B cell (primary cell): ENCODE measurements at regions of chr16 and their contacts with region 1.

Region 1: DNA sequence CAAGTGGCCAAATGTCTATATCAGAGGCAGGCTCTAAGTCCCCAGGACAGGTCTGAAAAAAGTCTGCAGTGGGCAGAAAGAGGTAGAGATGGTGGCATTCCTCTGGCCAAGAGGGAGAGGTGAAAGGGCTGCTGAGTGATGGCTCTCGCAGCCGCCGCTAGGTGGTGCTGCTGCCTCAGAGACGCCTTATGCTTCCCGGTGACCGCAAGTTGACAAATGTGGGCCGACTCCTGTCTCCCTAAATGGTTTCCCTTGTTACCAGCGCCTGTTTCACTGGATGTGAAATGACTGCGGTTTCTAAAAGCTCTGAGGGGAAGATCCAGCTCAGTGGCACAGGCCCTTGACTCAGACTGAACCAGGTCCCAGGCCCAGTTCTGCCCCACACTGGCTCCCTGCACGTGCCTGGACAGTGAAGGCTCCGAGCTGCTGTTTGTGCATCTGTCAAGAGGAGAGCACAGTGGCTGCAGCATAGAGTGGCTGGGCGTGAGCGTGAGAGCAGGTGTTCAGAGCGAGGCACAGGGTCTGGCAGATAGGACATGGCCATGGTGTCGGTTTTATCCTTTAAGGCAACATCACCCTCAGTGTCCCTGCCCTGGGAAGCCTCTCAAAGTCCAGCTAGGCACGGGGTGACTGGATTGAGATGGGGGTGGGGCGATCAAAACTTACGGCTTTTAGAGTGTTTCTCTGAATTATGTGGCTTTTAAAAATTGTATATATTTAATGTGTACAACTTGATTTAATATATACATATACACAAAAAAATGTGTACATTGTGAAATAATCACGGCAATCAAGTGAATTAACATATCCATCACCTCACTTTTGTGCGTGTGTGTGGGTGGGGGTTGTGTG is 19.9 kb downstream of the CLEC16A start:
- DNase-seq: peak; percentile 86
- ATAC-seq: peak; percentile 35
- H3K4me3 ChIP-seq: no peak overlapping the region
- H3K4me3 Mint-ChIP-seq: peak overlapping the region; percentile 70
- H3K27ac ChIP-seq: no peak overlapping the region
- H3K27ac Mint-ChIP-seq: peak overlapping the region; percentile 86
- H3K4me1 ChIP-seq: peaks cover 23 to 27% of the 10 kb centered on the region in 2 donors
- H3K4me1 Mint-ChIP-seq: peaks cover 39% of the 10 kb centered on the region
- H3K27me3 ChIP-seq: no peaks in the 10 kb centered on the region
- H3K27me3 Mint-ChIP-seq: no peaks in the 10 kb centered on the region
- CTCF ChIP-seq: peak; percentile 95

Region 2: DNA sequence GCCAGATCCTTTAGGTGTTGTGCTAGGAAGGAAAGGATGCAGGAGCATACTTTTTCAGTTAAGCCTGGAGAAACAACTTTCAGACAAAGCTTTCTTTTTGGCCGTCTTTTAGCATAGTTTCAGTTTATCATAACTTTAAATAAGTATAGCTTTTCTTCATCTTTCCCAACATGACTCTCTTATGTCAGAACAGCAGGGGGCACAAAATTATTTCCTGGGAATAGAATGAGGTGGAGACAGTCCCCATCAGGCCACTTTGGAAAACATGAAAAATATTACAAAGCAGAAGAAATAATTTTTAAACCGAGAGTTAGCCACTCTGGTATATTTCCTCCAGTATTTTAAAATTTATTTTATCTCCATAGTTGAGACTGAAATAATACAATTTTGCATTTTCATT is 1485.3 kb before region 1 on chr16:
- CTCF ChIA-PET with region 1: no interaction called
- POLR2A ChIA-PET with region 1: no interaction called
- intact Hi-C with region 1: no loop called
- DNase-seq: no peak
- ATAC-seq: no peak
- H3K4me3 ChIP-seq: no peak overlapping the region
- H3K4me3 Mint-ChIP-seq: no peak overlapping the region
- H3K27ac ChIP-seq: no peak overlapping the region
- H3K27ac Mint-ChIP-seq: no peak overlapping the region
- H3K4me1 ChIP-seq: no peaks in the 10 kb centered on the region
- H3K4me1 Mint-ChIP-seq: no peaks in the 10 kb centered on the region
- H3K27me3 ChIP-seq: no peaks in the 10 kb centered on the region
- H3K27me3 Mint-ChIP-seq: peaks cover 7% of the 10 kb centered on the region
- CTCF ChIP-seq: no peak

Region 3: GRCh38 chr16:10944249-10945064 is 19.8 kb before region 1 on chr16 and contains the start of gene CLEC16A:
- CTCF ChIA-PET with region 1: interaction called, 142 read pairs
- POLR2A ChIA-PET with region 1: interaction called, 5 read pairs
- intact Hi-C with region 1: loop called (anchors 1 kb)
- DNase-seq: peak; percentile 96
- ATAC-seq: peak; percentile 71
- H3K4me3 ChIP-seq: peak within 1 kb of the TSS; percentile 64 to 91 (median 77)
- H3K4me3 Mint-ChIP-seq: peak within 1 kb of the TSS; percentile 90
- H3K27ac ChIP-seq: peak within 1 kb of the TSS; percentile 54 to 83
- H3K27ac Mint-ChIP-seq: peak within 1 kb of the TSS; percentile 81
- H3K4me1 ChIP-seq: peaks cover 69 to 79% of the 10 kb centered on the region in 2 donors
- H3K4me1 Mint-ChIP-seq: peaks cover 78% of the 10 kb centered on the region
- H3K27me3 ChIP-seq: no peaks in the 10 kb centered on the region
- H3K27me3 Mint-ChIP-seq: no peaks in the 10 kb centered on the region
- CTCF ChIP-seq: no peak
- total RNA-seq, gene CLEC16A: 79.5 and 82.3 TPM in 2 replicates

Region 4: GRCh38 chr16:11094072-11094856 is 130.0 kb after region 1 on chr16:
- CTCF ChIA-PET with region 1: no interaction called
- POLR2A ChIA-PET with region 1: no interaction called
- intact Hi-C with region 1: loop called (anchors 2 kb)
- DNase-seq: peak; percentile 54
- ATAC-seq: peak; percentile 62
- H3K4me3 ChIP-seq: no peak overlapping the region
- H3K4me3 Mint-ChIP-seq: peak overlapping the region; percentile 67
- H3K27ac ChIP-seq: peak overlapping the region; percentile 48 to 54
- H3K27ac Mint-ChIP-seq: peak overlapping the region; percentile 92
- H3K4me1 ChIP-seq: peaks cover 27 to 33% of the 10 kb centered on the region in 2 donors
- H3K4me1 Mint-ChIP-seq: peaks cover 38% of the 10 kb centered on the region
- H3K27me3 ChIP-seq: no peaks in the 10 kb centered on the region
- H3K27me3 Mint-ChIP-seq: no peaks in the 10 kb centered on the region
- CTCF ChIP-seq: no peak

Region 5: GRCh38 chr16:11312718-11313492 is 348.6 kb after region 1 on chr16:
- CTCF ChIA-PET with region 1: interaction called, 4 read pairs
- POLR2A ChIA-PET with region 1: interaction called, 6 read pairs
- intact Hi-C with region 1: loop called (anchors 2 kb)
- DNase-seq: peak; percentile 37
- ATAC-seq: no peak
- H3K4me3 ChIP-seq: no peak overlapping the region
- H3K4me3 Mint-ChIP-seq: peak overlapping the region; percentile 48
- H3K27ac ChIP-seq: no peak overlapping the region
- H3K27ac Mint-ChIP-seq: peak overlapping the region; percentile 82
- H3K4me1 ChIP-seq: peaks cover 59 to 73% of the 10 kb centered on the region in 2 donors
- H3K4me1 Mint-ChIP-seq: peaks cover 71% of the 10 kb centered on the region
- H3K27me3 ChIP-seq: no peaks in the 10 kb centered on the region
- H3K27me3 Mint-ChIP-seq: no peaks in the 10 kb centered on the region
- CTCF ChIP-seq: no peak

Region 6: GRCh38 chr16:11396241-11397048 is 432.2 kb after region 1 on chr16:
- CTCF ChIA-PET with region 1: interaction called, 27 read pairs
- POLR2A ChIA-PET with region 1: interaction called, 3 read pairs
- intact Hi-C with region 1: no loop called
- DNase-seq: peak; percentile 76
- ATAC-seq: peak; percentile 79
- H3K4me3 ChIP-seq: no peak overlapping the region
- H3K4me3 Mint-ChIP-seq: no peak overlapping the region
- H3K27ac ChIP-seq: no peak overlapping the region
- H3K27ac Mint-ChIP-seq: no peak overlapping the region
- H3K4me1 ChIP-seq: peaks cover 0 to 6% of the 10 kb centered on the region in 2 donors
- H3K4me1 Mint-ChIP-seq: peaks cover 8% of the 10 kb centered on the region
- H3K27me3 ChIP-seq: peaks cover 0 to 3% (median 1%) of the 10 kb centered on the region in 4 experiments
- H3K27me3 Mint-ChIP-seq: no peaks in the 10 kb centered on the region
- CTCF ChIP-seq: peak; percentile 99

Region 7: GRCh38 chr16:11535471-11535870 is 571.2 kb after region 1 on chr16:
- CTCF ChIA-PET with region 1: interaction called, 31 read pairs
- POLR2A ChIA-PET with region 1: no interaction called
- intact Hi-C with region 1: loop called (anchors 10 kb)
- DNase-seq: no peak
- ATAC-seq: no peak
- H3K4me3 ChIP-seq: no peak overlapping the region
- H3K4me3 Mint-ChIP-seq: no peak overlapping the region
- H3K27ac ChIP-seq: no peak overlapping the region
- H3K27ac Mint-ChIP-seq: no peak overlapping the region
- H3K4me1 ChIP-seq: no peaks in the 10 kb centered on the region
- H3K4me1 Mint-ChIP-seq: peaks cover 5% of the 10 kb centered on the region
- H3K27me3 ChIP-seq: no peaks in the 10 kb centered on the region
- H3K27me3 Mint-ChIP-seq: no peaks in the 10 kb centered on the region
- CTCF ChIP-seq: no peak

Region 8: DNA sequence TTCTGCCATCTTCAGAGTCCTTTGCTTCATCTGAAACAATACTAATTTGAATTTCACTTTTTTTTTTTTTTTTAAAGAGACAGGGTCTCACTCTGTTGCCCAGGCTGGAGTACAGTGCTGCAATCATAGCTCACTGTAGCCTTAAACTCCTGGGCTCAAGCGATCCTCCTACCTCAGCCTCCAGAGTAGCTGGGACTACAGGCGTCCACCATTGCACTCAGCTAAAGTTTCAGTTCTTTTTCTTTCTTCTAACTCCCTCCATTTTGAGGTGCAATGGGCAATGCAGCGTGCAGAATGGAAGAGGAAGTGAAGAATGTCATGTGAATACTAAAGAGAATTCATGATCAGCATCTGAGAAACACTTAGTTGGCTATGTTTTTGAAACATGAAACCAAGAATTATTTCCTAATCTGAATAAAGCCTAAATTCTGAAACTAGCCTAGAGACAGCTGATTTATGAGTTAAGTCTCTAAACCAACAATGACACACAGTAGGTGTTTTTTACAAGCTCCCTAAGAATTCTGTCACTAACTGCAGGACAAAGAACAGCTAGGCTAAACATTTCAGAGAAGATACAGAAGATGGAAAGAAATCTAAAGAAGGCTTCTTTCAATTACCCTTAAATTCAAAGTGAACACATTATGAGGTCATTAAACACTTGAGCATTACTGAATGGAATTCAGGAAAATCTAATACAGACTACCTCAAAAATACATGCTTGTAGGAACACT is 724.9 kb after region 1 on chr16:
- CTCF ChIA-PET with region 1: interaction called, 3 read pairs
- POLR2A ChIA-PET with region 1: no interaction called
- intact Hi-C with region 1: loop called (anchors 10 kb)
- DNase-seq: peak; percentile 87
- ATAC-seq: peak; percentile 96
- H3K4me3 ChIP-seq: peak overlapping the region in 1 of 5 experiments; percentile 49
- H3K4me3 Mint-ChIP-seq: peak overlapping the region; percentile 88
- H3K27ac ChIP-seq: peak overlapping the region; percentile 80 to 89
- H3K27ac Mint-ChIP-seq: peak overlapping the region; percentile 98
- H3K4me1 ChIP-seq: peaks cover 70 to 71% of the 10 kb centered on the region in 2 donors
- H3K4me1 Mint-ChIP-seq: peaks cover 76% of the 10 kb centered on the region
- H3K27me3 ChIP-seq: no peaks in the 10 kb centered on the region
- H3K27me3 Mint-ChIP-seq: no peaks in the 10 kb centered on the region
- CTCF ChIP-seq: no peak